ENCODE measurements at regions of chr2 and their contacts with region 1.

Region 1: DNA sequence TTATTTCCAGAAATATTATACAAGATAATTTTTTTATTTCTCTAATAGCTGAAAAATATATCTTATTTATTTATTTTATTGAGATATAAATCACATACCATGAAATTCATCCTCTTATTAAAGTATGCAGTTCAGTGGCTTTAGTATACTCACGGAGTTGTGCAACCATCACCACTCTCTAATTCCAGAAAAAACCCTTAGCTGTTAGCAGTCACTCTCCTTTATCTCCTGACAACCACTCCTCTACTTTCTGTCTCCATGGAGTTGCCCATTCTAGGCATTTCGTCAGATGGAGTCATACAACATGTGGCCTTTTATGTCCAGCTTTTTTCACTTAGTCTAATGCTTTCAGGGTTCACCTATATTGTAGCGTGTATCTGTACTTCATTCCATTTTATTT is 66.5 kb downstream of the TCF7L1 start:
- DNase-seq: no peak
- ATAC-seq: no peak
- H3K4me3 ChIP-seq: no peak overlapping the region
- H3K27ac ChIP-seq: no peak overlapping the region
- H3K4me1 ChIP-seq: no peaks in the 10 kb centered on the region
- H3K27me3 ChIP-seq: no peaks in the 10 kb centered on the region
- CTCF ChIP-seq: no peak

Region 2: DNA sequence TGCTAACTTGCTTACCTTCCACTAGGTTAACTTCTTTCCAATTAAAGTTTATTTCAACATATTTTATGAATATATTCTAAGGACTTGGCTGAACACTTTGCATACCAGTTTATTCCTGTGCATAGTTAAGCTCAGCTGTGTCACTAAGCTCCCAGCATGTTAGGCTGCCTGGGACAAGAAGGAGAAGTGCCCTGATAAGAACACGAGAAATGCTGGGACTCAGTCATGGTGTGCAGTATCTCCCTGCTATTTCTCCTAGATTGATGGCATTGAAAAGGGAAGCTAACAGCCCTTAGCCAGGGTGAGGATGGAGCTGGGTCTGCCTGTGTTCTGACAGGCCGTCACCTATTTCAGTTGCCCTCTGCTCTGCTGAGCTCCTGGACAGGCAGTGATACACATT is 483.1 kb before region 1 on chr2:
- CTCF ChIA-PET with region 1: no interaction called
- POLR2A ChIA-PET with region 1: no interaction called
- in situ Hi-C with region 1: no loop called
- intact Hi-C with region 1: no loop called
- DNase-seq: no peak
- ATAC-seq: no peak
- H3K4me3 ChIP-seq: no peak overlapping the region
- H3K27ac ChIP-seq: no peak overlapping the region
- H3K4me1 ChIP-seq: no peaks in the 10 kb centered on the region
- H3K27me3 ChIP-seq: peaks cover 2% of the 10 kb centered on the region; the same call in 1 of the 2 replicates
- CTCF ChIP-seq: no peak

Region 3: GRCh38 chr2:84856787-84857186 is 342.9 kb before region 1 on chr2:
- CTCF ChIA-PET with region 1: no interaction called
- POLR2A ChIA-PET with region 1: no interaction called
- in situ Hi-C with region 1: no loop called
- intact Hi-C with region 1: no loop called
- DNase-seq: no peak
- ATAC-seq: no peak
- H3K4me3 ChIP-seq: no peak overlapping the region
- H3K27ac ChIP-seq: no peak overlapping the region
- H3K4me1 ChIP-seq: no peaks in the 10 kb centered on the region
- H3K27me3 ChIP-seq: no peaks in the 10 kb centered on the region
- CTCF ChIP-seq: no peak

Region 4: DNA sequence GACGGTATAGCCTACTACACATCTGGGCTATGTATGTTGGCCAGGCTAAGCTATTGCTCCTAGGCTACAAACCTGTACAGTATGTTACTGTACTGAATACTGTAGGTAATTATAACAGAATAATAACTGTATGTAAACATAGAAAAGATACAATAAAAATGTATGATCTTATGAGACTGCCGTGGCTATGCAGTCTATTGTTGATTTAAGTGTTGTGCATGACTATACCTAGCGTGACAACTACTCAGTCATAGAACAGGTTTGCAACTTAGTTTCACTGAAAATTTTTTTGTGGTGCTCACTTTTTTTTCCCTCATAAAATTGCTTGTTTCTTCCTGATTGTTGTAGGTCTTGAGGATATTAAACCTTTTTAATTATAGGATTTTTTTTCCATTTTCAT is 202.8 kb before region 1 on chr2:
- CTCF ChIA-PET with region 1: no interaction called
- POLR2A ChIA-PET with region 1: no interaction called
- in situ Hi-C with region 1: no loop called
- intact Hi-C with region 1: no loop called
- DNase-seq: no peak
- ATAC-seq: no peak
- H3K4me3 ChIP-seq: no peak overlapping the region
- H3K27ac ChIP-seq: no peak overlapping the region
- H3K4me1 ChIP-seq: peaks cover 20% of the 10 kb centered on the region
- H3K27me3 ChIP-seq: no peaks in the 10 kb centered on the region
- CTCF ChIP-seq: no peak

Region 5: DNA sequence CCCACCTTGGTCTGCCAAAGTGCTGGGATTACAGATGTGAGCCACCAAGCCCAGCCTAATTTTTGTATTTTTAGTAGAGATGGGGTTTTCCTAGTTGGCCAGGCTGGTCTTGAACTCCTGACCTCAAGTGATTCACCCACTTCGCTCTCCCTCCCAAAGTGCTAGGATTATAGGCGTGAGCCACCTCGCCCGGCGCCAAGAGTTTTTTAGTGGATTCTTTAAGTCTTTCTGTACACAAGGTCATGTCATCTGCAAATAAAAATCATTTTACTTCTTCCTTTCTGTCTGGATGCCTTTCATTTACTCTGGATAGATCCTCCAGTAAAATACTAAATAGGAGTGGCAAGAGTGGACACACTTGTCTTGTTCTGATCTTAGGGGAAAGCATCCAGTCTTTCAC is 167.1 kb before region 1 on chr2:
- CTCF ChIA-PET with region 1: no interaction called
- POLR2A ChIA-PET with region 1: no interaction called
- in situ Hi-C with region 1: no loop called
- intact Hi-C with region 1: no loop called
- DNase-seq: no peak
- ATAC-seq: no peak
- H3K4me3 ChIP-seq: no peak overlapping the region
- H3K27ac ChIP-seq: no peak overlapping the region
- H3K4me1 ChIP-seq: no peaks in the 10 kb centered on the region
- H3K27me3 ChIP-seq: no peaks in the 10 kb centered on the region
- CTCF ChIP-seq: no peak

Region 6: DNA sequence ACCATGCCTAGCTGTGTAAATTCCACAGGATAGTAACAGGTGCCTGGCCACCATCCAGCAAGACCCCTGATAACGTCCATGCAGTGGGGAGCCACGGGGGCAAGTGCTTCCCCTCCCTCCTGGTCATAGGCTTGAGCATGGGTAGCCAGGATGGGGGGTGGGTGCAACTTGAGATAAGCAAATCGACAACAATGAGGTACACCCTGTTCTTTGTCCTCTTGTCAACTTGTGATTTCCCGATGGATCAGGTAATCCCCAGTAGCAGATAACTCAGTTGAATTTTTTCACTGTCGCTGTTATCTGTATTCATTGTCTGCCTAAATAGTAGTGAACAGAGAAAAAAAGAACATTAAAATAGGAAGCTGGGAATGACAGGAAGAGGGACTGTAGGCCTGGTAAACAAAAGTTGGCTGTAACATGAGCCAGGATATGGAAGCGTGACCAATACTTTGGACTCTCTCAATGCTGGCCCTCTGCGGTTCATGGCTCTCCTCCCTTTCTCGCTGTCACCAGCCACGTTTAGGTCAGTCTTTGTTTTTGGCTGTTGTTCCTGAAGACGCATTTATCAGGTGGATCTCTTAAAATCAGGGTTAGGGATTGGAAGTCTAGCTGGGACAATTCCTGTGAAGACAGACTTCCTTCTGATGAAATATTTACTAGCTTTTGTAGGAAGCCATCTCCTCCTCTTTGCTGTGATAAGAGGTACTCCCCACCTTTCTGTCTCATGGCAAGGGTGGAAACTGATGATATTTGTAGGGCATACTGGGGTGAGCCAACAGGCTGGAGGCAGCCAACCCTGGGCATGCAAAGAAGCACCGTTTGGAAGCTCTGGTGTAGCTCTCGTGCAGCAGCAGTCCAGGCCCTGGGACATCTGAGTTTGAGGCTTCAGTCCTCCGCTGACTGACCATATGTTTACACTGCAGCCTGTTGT is 24.1 kb before region 1 on chr2:
- CTCF ChIA-PET with region 1: no interaction called
- POLR2A ChIA-PET with region 1: interaction called, 10 read pairs
- in situ Hi-C with region 1: no loop called
- intact Hi-C with region 1: no loop called
- DNase-seq: no peak
- ATAC-seq: no peak
- H3K4me3 ChIP-seq: no peak overlapping the region
- H3K27ac ChIP-seq: no peak overlapping the region
- H3K4me1 ChIP-seq: peaks cover 3% of the 10 kb centered on the region
- H3K27me3 ChIP-seq: no peaks in the 10 kb centered on the region
- CTCF ChIP-seq: no peak

Region 7: DNA sequence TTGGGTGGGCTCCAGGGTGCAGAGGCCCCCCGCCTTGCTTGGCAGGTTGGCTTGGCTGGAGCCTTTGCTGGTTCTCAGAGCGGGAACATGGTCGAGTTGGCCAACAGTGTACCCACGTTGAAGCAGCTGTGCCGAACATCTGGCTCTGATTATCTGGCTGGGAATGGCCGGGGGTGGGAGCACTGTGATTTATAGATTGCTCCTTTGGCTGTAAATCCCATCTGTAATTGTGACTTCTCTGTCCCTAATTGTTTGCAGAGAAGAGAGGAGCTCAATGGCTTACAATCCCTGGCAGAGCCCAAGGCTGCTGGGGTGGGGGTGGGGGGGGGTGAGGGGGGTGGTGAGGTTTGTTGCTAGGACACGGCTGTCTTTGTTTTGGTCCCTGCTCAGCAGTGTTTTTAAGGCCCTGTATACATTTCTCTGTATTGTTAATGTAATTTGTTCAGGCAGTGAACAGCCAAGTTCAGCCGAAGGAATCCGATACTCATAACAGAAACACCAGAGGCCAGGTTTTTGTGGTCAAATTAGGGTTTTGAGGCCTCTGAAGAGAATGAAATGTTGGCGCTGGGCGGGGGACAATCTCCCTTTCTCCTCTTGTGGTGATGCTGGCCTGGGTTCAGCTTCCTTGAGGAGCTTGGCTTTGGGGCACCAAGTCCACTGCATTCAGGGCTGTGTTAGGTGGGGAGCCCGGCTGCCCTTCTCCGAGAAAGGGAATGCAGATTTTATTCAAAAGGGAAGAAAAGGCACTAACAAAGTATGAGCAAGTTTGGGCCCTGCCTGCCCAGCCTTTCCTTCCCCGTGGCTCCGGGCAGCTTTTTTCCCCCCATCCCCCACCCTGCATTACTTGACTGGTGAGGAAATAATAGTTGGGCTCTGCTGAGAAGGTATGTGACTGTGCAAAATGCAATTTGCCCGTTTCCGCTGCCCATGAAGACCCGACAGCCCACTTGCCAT is 16.0 kb after region 1 on chr2:
- CTCF ChIA-PET with region 1: no interaction called
- POLR2A ChIA-PET with region 1: interaction called, 11 read pairs
- in situ Hi-C with region 1: no loop called
- intact Hi-C with region 1: no loop called
- DNase-seq: no peak
- ATAC-seq: no peak
- H3K4me3 ChIP-seq: no peak overlapping the region
- H3K27ac ChIP-seq: no peak overlapping the region
- H3K4me1 ChIP-seq: peaks cover 5% of the 10 kb centered on the region; the same call in 1 of the 2 replicates
- H3K27me3 ChIP-seq: no peaks in the 10 kb centered on the region
- CTCF ChIP-seq: no peak

Measured in Panc1 (cell line).